Heart right ventricle (tissue), 16 donors: ENCODE measurements at regions of chr10 and their contacts with region 1.

Region 1: DNA sequence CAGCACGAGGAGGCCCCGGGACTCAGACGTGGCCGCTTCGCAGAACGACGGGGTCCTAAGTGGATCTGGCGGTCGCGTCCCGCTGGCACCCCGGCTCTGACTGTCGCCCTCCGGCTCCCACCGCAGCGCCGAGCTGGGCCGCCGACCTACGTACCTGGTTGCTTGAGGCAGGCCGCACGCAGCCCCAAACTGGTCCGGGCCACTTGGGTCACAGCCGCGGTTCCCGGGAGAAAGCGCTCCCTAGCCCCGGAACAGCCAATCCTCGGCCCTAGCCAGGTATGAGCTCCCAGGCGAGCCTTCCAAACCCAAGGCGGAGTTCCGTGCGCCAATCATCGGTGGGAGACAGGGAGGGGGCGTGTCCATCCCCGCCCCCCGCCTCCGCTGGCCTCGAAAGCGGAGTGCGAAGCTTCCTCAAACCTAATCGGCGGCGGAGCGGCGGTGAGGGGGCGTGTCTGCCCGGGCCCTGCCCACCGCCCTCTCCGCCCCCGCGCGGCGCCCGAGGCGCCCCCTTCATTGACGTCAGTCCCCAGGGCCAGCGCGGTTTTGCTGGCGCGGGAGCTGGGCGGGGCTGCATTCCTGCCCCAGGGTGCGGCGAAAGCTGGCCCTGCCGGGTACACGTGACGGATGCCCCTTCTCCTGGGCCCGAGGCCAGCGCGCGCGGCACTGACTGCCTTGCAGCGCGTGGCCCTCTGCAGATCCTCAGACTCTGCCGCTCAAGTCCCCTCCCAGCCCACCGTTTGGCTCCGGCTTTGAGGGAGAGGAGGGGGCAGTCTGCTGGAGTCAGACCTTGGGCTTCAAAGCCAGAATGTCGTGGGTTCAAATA is at the start of gene AVPI1:
- DNase-seq: peak; percentile 96 to 98
- ATAC-seq: peak; percentile 93 to 97 (median 96)
- H3K4me3 ChIP-seq: peak within 1 kb of the TSS; percentile 50 to 89 (median 74)
- H3K27ac ChIP-seq: peak within 1 kb of the TSS; percentile 64 to 93 (median 89)
- H3K4me1 ChIP-seq: peaks cover 10 to 64% (median 42%) of the 10 kb centered on the region in 9 donors
- H3K27me3 ChIP-seq: no peaks in the 10 kb centered on the region
- CTCF ChIP-seq: no peak
- total RNA-seq, gene AVPI1: 6.5 to 12.9 (median 9.1) TPM

Region 2: GRCh38 chr10:97498841-97499560 is 188.2 kb before region 1 on chr10 and contains the start of gene UBTD1:
- intact Hi-C with region 1: no loop called
- DNase-seq: peak; percentile 44 to 60
- ATAC-seq: peak in 5 of 8 donors; percentile 4 to 16 (median 11)
- H3K4me3 ChIP-seq: peak within 1 kb of the TSS; percentile 77 to 100 (median 94)
- H3K27ac ChIP-seq: peak within 1 kb of the TSS; percentile 74 to 97 (median 94)
- H3K4me1 ChIP-seq: peaks cover 13 to 79% (median 58%) of the 10 kb centered on the region in 9 donors
- H3K27me3 ChIP-seq: no peaks in the 10 kb centered on the region
- CTCF ChIP-seq: peak in 3 of 9 donors; percentile 20 to 38 (median 31)
- total RNA-seq, gene UBTD1: 13.6 to 34.0 (median 20.5) TPM

Region 3: DNA sequence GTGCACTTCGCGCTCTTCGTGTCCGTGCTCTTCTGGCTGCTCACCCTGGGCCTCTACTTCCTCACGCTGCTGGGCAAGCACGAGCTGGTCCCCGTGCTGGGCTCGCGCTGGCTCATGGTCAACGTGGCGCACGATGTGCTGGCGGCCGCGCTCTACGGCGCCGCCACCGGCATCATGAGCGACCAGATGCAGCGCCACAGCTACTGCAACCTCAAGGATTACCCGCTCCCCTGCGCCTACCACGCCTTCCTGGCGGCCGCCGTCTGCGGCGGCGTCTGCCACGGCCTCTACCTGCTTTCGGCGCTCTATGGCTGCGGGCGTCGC is 26.8 kb after region 1 on chr10:
- intact Hi-C with region 1: loop called in 1 of 10 experiments (anchors 2 kb)
- DNase-seq: peak; percentile 70 to 76
- ATAC-seq: peak; percentile 63 to 86 (median 70)
- H3K4me3 ChIP-seq: peak overlapping the region; percentile 57 to 80 (median 70)
- H3K27ac ChIP-seq: peak overlapping the region; percentile 87 to 98 (median 94)
- H3K4me1 ChIP-seq: peaks cover 6 to 69% (median 44%) of the 10 kb centered on the region in 9 donors
- H3K27me3 ChIP-seq: no peaks in the 10 kb centered on the region
- CTCF ChIP-seq: peak in 4 of 9 donors; percentile 24 to 41 (median 34)

Region 4: GRCh38 chr10:97736902-97737769 is 50.0 kb after region 1 on chr10 and contains the start of gene ZFYVE27:
- intact Hi-C with region 1: loop called in 4 of 10 experiments (anchors 2 to 5 kb)
- DNase-seq: peak; percentile 96 to 98
- ATAC-seq: peak; percentile 97 to 99 (median 98)
- H3K4me3 ChIP-seq: peak within 1 kb of the TSS; percentile 65 to 99 (median 93)
- H3K27ac ChIP-seq: peak within 1 kb of the TSS; percentile 49 to 96 (median 94)
- H3K4me1 ChIP-seq: peaks cover 3 to 33% (median 18%) of the 10 kb centered on the region in 9 donors
- H3K27me3 ChIP-seq: no peaks in the 10 kb centered on the region
- CTCF ChIP-seq: no peak
- total RNA-seq, gene ZFYVE27: 7.5 to 16.0 (median 11.8) TPM

Region 5: GRCh38 chr10:97822261-97822687 is 135.1 kb after region 1 on chr10:
- intact Hi-C with region 1: no loop called
- DNase-seq: peak in 1 of 2 donors; percentile 41
- ATAC-seq: peak in 7 of 8 donors; percentile 44 to 86 (median 60)
- H3K4me3 ChIP-seq: no peak overlapping the region
- H3K27ac ChIP-seq: peak overlapping the region in 3 of 10 donors; percentile 11 to 56 (median 39)
- H3K4me1 ChIP-seq: no peaks in the 10 kb centered on the region
- H3K27me3 ChIP-seq: peaks cover 0 to 11% (median 0%) of the 10 kb centered on the region in 7 donors
- CTCF ChIP-seq: no peak